ENCODE measurements at regions of chr1 and their contacts with region 1.

Region 1: GRCh38 chr1:101282314-101283038 is 45.7 kb downstream of the S1PR1 start:
- DNase-seq: no peak
- H3K4me3 ChIP-seq: no peak overlapping the region
- H3K27ac ChIP-seq: peak overlapping the region in 2 of 8 donors; percentile 59 to 79
- H3K4me1 ChIP-seq: peaks cover 4 to 61% (median 11%) of the 10 kb centered on the region in 6 donors
- H3K27me3 ChIP-seq: no peaks in the 10 kb centered on the region
- CTCF ChIP-seq: no peak
- POLR2A ChIP-seq: no peak

Region 2: GRCh38 chr1:100928128-100928527 is 354.3 kb before region 1 on chr1:
- intact Hi-C with region 1: loop called (anchors 5 kb)
- DNase-seq: no peak
- H3K4me3 ChIP-seq: no peak overlapping the region
- H3K27ac ChIP-seq: peak overlapping the region in 5 of 8 donors; percentile 44 to 79 (median 61)
- H3K4me1 ChIP-seq: peaks cover 0 to 74% (median 24%) of the 10 kb centered on the region in 6 donors
- H3K27me3 ChIP-seq: no peaks in the 10 kb centered on the region
- CTCF ChIP-seq: no peak
- POLR2A ChIP-seq: no peak

Region 3: GRCh38 chr1:101474039-101474665 is 191.7 kb after region 1 on chr1:
- intact Hi-C with region 1: no loop called
- DNase-seq: no peak
- H3K4me3 ChIP-seq: no peak overlapping the region
- H3K27ac ChIP-seq: no peak overlapping the region
- H3K4me1 ChIP-seq: no peaks in the 10 kb centered on the region
- H3K27me3 ChIP-seq: no peaks in the 10 kb centered on the region
- CTCF ChIP-seq: peak in 2 of 11 experiments; percentile 13 to 14
- POLR2A ChIP-seq: no peak

Measured in spleen (tissue), 13 donors.